Left ventricle myocardium inferior (tissue), 1 donor: ENCODE measurements at regions of chr9 and their contacts with region 1.

Region 1: GRCh38 chr9:6353851-6354686 is 25.9 kb downstream of the TPD52L3 start:
- DNase-seq: no peak
- H3K4me3 ChIP-seq: no peak overlapping the region
- H3K27ac ChIP-seq: no peak overlapping the region
- H3K4me1 ChIP-seq: no peaks in the 10 kb centered on the region
- H3K27me3 ChIP-seq: peaks cover 27% of the 10 kb centered on the region
- CTCF ChIP-seq: peak; percentile 86

Region 2: DNA sequence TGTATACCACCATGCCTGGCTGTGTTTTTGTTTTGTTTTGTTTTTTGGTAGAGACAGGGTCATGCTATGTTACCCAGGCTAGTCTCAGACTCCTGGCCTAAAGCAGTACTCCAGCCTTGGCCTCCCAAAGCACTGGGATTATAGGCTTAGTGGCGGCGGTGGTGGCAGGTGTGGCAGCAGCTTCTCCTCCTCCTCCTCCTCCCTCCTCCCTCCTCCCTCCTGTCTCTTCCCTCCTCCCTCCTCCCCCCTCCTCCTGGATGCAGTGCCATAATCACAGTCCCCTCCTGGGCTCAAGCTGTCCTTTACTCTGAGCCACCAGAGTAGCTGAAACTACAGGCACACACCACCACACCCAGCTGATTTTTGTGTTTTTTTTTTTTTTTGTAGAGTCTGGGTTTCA is 130.1 kb after region 1 on chr9:
- intact Hi-C with region 1: no loop called
- DNase-seq: no peak
- H3K4me3 ChIP-seq: no peak overlapping the region
- H3K27ac ChIP-seq: no peak overlapping the region
- H3K4me1 ChIP-seq: no peaks in the 10 kb centered on the region
- H3K27me3 ChIP-seq: no peaks in the 10 kb centered on the region
- CTCF ChIP-seq: no peak

Region 3: GRCh38 chr9:6538666-6539071 is 184.6 kb after region 1 on chr9:
- intact Hi-C with region 1: no loop called
- DNase-seq: no peak
- H3K4me3 ChIP-seq: no peak overlapping the region
- H3K27ac ChIP-seq: no peak overlapping the region
- H3K4me1 ChIP-seq: no peaks in the 10 kb centered on the region
- H3K27me3 ChIP-seq: peaks cover 11% of the 10 kb centered on the region
- CTCF ChIP-seq: no peak

Region 4: DNA sequence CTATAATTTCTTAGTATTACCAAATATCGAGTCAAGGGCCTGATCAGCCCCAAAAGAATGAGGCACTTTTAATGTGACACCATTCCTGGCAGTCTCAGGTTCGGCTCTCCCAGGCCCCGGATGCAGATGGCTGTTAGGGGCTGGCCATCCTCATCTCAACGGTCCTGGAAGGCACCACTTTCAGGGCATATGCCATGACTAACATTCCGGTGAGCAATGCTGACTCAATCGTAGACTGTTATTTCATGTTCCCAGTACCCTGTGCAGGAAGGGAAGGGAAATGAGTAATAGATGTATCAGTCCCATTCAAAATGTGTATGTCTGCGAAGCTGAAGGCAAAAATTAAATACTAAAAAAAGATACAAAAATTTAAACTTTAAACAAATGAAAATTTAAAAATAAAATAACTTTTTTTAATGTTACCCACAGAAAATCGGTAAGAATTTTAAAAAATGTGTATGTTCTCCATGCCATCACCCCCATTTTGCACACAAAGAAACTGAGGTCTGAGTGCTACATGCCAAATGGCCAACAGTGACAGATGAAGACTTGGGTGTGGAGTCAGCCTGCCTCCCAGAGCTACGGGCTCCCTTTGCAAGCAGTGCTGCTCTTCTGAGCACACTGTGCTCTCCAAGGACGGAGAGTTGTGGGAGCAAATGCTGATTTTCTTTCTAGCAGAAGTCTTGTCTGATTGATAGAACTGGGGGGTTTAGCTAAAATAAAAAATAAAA is 212.5 kb after region 1 on chr9:
- intact Hi-C with region 1: loop called (anchors 2 kb)
- DNase-seq: no peak
- H3K4me3 ChIP-seq: no peak overlapping the region
- H3K27ac ChIP-seq: no peak overlapping the region
- H3K4me1 ChIP-seq: peaks cover 12% of the 10 kb centered on the region
- H3K27me3 ChIP-seq: peaks cover 26% of the 10 kb centered on the region
- CTCF ChIP-seq: no peak